PC-3 (cell line): ENCODE measurements at regions of chr1 and their contacts with region 1.

Region 1: GRCh38 chr1:43454266-43455011 is 708 bp upstream of the HYI start:
- DNase-seq: peak; percentile 93
- ATAC-seq: peak; percentile 80
- H3K4me3 ChIP-seq: peak overlapping the region; percentile 63
- H3K27ac ChIP-seq: peak overlapping the region; percentile 71
- H3K4me1 ChIP-seq: peaks cover 29% of the 10 kb centered on the region
- H3K27me3 ChIP-seq: no peaks in the 10 kb centered on the region
- CTCF ChIP-seq: no peak

Region 2: DNA sequence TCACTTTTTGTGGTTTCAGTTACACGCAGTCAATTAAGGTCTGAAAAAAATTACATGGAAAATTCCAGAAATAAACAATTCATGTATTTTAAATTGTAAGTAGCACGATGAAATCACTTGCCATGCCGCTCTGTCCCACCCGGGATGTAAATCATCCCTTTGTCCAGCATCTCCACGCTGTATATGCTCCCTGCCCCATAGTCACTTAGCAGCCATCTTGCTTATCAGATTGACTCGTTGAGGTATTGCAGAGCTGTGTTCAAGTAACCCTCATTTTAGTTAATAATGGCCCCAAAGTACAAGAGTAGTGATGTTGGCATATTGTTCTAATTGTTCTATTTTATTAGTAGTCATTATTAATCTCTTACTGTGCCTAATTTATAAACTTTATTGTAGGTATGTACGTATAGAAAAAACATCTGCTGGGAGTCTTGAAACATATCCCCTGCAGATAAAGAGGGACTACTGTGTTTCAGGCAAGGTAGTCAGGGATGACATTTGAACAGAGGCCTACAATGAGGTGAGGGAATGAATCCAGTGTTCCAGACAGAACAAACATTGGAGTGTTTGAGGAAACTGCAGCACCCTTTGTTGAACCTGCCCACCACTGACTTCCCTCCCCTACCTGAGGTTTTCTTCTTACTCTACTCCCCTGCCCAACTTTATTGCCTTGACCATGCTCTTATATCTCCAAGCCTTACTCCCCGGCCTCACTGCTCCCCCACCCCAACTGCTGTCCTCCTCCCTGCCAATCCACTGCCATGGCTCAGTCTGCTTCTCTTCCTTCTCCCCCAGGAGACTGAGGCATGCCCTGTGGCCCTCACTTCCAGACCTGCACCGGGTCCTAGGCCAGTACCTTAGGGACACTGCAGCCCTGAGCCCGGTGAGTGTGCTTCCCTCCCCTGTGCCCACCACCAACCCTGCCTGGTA is 102.8 kb before region 1 on chr1:
- CTCF ChIA-PET with region 1: no interaction called
- POLR2A ChIA-PET with region 1: no interaction called
- intact Hi-C with region 1: no loop called
- DNase-seq: no peak
- ATAC-seq: no peak
- H3K4me3 ChIP-seq: no peak overlapping the region
- H3K27ac ChIP-seq: no peak overlapping the region
- H3K4me1 ChIP-seq: peaks cover 23% of the 10 kb centered on the region
- H3K27me3 ChIP-seq: no peaks in the 10 kb centered on the region
- CTCF ChIP-seq: no peak

Region 3: GRCh38 chr1:43477726-43478125 is 23.3 kb after region 1 on chr1:
- CTCF ChIA-PET with region 1: no interaction called
- POLR2A ChIA-PET with region 1: no interaction called
- intact Hi-C with region 1: loop called (anchors 2 kb)
- DNase-seq: peak; percentile 27
- ATAC-seq: no peak
- H3K4me3 ChIP-seq: no peak overlapping the region
- H3K27ac ChIP-seq: no peak overlapping the region
- H3K4me1 ChIP-seq: peaks cover 50% of the 10 kb centered on the region
- H3K27me3 ChIP-seq: no peaks in the 10 kb centered on the region
- CTCF ChIP-seq: no peak

Region 4: GRCh38 chr1:43522776-43523480 is 68.5 kb after region 1 on chr1:
- CTCF ChIA-PET with region 1: no interaction called
- POLR2A ChIA-PET with region 1: interaction called, 3 read pairs
- intact Hi-C with region 1: loop called (anchors 5 kb)
- DNase-seq: peak; percentile 95
- ATAC-seq: peak; percentile 98
- H3K4me3 ChIP-seq: no peak overlapping the region
- H3K27ac ChIP-seq: peak overlapping the region; percentile 28; the same call in 1 of the 2 replicates
- H3K4me1 ChIP-seq: peaks cover 27% of the 10 kb centered on the region
- H3K27me3 ChIP-seq: no peaks in the 10 kb centered on the region
- CTCF ChIP-seq: no peak